ENCODE measurements at regions of chr7 and their contacts with region 1.

Region 1: GRCh38 chr7:92633211-92633906 is 43.2 kb upstream of the FAM133B start:
- DNase-seq: peak; percentile 46
- ATAC-seq: peak; percentile 34
- H3K4me3 Mint-ChIP-seq: peak overlapping the region; percentile 48
- H3K27ac Mint-ChIP-seq: peak overlapping the region; percentile 89
- H3K4me1 Mint-ChIP-seq: peaks cover 82% of the 10 kb centered on the region
- H3K27me3 Mint-ChIP-seq: no peaks in the 10 kb centered on the region

Region 2: DNA sequence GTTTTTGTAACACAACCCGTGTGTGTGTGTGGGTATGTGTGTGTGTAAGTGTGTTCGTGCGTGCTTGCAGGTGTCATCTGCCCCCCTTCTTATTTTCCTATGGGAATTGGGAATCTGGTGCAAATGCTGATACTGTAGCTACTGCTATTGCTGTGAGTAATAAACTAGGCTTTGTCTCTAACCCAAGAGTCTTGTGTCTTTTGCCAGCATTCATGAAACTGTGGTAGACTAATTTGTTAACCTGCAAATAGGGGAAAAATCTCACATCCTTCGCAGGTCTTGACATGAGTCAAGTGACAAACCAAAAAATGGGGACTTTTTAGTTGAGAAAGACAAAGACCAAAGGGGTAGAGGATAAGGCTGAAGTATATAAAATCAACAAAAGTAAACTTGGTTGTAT is 14.7 kb after region 1 on chr7:
- CTCF ChIA-PET with region 1: interaction called, 55 read pairs
- POLR2A ChIA-PET with region 1: interaction called, 14 read pairs
- intact Hi-C with region 1: loop called (anchors 1 kb)
- DNase-seq: no peak
- ATAC-seq: peak; percentile 58
- H3K4me3 Mint-ChIP-seq: no peak overlapping the region
- H3K27ac Mint-ChIP-seq: peak overlapping the region; percentile 85
- H3K4me1 Mint-ChIP-seq: peaks cover 86% of the 10 kb centered on the region
- H3K27me3 Mint-ChIP-seq: no peaks in the 10 kb centered on the region

Region 3: DNA sequence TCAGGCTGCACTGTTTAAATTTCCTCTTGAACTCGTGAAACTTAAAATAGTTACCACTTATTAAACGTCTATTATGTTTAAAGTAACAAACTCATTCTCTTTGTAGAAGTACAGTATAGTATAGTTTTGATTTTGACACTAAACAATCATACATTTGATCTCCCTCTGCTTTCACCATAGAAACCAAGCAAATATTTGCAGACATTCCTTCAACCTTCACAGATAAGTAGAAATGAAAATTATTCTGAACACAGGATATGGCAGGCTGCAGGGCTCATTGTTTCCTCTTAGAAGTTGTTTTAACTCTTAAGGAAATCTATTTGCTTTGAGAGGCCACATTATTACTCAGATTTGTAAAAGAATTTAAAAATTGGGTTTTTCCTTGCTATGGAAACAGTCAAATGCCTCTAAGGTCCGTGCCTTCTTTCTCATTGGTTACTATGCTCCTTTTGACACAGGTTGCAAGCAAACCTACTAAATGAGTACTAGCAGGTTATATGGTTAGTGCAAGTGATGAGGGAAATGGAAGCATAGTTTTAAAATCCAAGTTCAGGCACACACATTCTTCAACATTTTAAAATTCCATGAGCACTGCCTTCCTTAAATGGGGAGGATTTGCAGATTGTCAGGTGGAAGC is 49.7 kb after region 1 on chr7:
- CTCF ChIA-PET with region 1: interaction called, 3 read pairs
- POLR2A ChIA-PET with region 1: no interaction called
- intact Hi-C with region 1: loop called (anchors 1 kb)
- DNase-seq: no peak
- ATAC-seq: peak; percentile 53
- H3K4me3 Mint-ChIP-seq: peak overlapping the region; percentile 39
- H3K27ac Mint-ChIP-seq: peak overlapping the region; percentile 88
- H3K4me1 Mint-ChIP-seq: peaks cover 83% of the 10 kb centered on the region
- H3K27me3 Mint-ChIP-seq: no peaks in the 10 kb centered on the region

Region 4: DNA sequence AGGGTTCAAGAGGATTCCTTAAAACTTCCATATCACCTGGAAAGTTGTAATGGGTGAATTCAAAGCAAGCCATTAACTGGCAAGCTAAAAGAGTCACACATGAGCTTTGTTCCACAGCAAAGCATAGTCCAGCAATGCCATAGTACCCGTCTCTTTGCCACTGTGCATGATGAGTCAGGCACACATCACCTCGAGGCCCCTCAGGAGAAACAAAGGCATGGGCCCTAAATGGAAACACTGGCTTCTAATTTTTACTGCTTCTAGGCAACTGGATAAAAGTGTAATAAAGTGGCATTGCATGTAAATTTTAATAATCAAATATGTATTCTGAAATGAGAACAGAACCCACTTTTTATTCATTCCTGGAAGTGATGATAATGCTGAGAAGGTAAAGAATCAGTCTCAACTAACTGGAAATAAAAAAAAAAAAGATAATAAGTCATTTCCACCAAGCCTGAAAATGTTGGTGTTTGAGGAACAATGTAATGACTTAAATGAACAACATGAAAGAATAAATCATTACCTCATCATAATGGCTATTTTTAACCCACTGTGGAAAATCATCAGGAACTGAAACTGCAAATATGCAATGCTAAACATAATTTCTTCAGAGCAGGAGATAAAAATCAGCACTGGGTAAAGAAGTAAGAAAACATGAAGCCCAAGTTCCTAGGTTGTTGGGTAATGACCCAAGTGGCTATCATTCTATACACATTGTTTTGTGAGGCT is 98.1 kb after region 1 on chr7:
- CTCF ChIA-PET with region 1: interaction called, 5 read pairs
- POLR2A ChIA-PET with region 1: interaction called, 10 read pairs
- intact Hi-C with region 1: loop called (anchors 1 kb)
- DNase-seq: peak; percentile 68
- ATAC-seq: peak; percentile 72
- H3K4me3 Mint-ChIP-seq: peak overlapping the region; percentile 21
- H3K27ac Mint-ChIP-seq: peak overlapping the region; percentile 88
- H3K4me1 Mint-ChIP-seq: peaks cover 61% of the 10 kb centered on the region
- H3K27me3 Mint-ChIP-seq: no peaks in the 10 kb centered on the region

Region 5: GRCh38 chr7:92809397-92810241 is 176.3 kb after region 1 on chr7:
- CTCF ChIA-PET with region 1: interaction called, 12 read pairs
- POLR2A ChIA-PET with region 1: interaction called, 15 read pairs
- intact Hi-C with region 1: loop called (anchors 1 kb)
- DNase-seq: peak; percentile 75
- ATAC-seq: peak; percentile 56
- H3K4me3 Mint-ChIP-seq: peak overlapping the region; percentile 50
- H3K27ac Mint-ChIP-seq: peak overlapping the region; percentile 83
- H3K4me1 Mint-ChIP-seq: peaks cover 81% of the 10 kb centered on the region
- H3K27me3 Mint-ChIP-seq: no peaks in the 10 kb centered on the region

Region 6: DNA sequence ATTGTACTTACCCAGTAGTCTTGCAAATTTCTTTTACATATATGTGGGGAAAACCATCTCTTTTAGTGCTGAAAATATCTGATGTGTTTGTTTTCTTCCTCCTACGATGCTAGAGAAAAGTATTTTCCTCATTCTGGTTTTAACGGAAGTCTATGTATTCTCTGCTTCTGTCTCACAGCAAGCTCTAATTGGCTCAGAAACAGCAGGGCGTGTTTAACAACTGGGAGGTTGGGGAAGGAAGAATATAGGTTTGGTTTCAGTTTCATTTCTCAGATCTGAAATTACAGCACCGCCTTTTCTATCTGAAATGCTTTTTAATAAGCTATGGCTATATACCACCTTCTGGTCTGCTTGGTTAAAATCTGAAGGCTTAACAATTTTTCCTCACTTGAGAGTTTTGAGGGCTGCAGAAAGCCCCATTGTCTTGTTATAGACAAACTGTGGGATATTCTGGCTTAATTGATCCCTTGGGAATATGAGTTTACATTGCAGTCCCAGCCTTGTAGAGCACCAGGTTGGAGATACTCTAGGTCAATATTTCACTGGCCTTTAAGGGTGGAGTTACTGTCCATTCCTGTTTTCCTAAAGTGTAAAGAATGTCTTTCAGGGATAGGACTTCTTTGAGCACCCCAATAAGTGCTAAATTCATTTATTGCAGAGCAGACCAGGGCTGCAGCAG is 484.6 kb after region 1 on chr7 and contains the start of gene SAMD9:
- CTCF ChIA-PET with region 1: no interaction called
- POLR2A ChIA-PET with region 1: no interaction called
- intact Hi-C with region 1: loop called (anchors 2 to 5 kb)
- DNase-seq: peak; percentile 65
- ATAC-seq: peak; percentile 89
- H3K4me3 Mint-ChIP-seq: peak within 1 kb of the TSS; percentile 78
- H3K27ac Mint-ChIP-seq: peak within 1 kb of the TSS; percentile 88
- H3K4me1 Mint-ChIP-seq: peaks cover 49% of the 10 kb centered on the region
- H3K27me3 Mint-ChIP-seq: no peaks in the 10 kb centered on the region
- total RNA-seq, gene SAMD9: 10.2 to 10.7 TPM

Measured in activated CD4-positive, alpha-beta T cell treated with anti-CD3 and anti-CD28 coated beads for 36 hours (primary cell).